ENCODE measurements at regions of chr11 and their contacts with region 1.

Region 1: GRCh38 chr11:76984747-76985146 is 49.5 kb upstream of the B3GNT6 start:
- DNase-seq: no peak
- ATAC-seq: no peak
- H3K4me3 ChIP-seq: no peak overlapping the region
- H3K27ac ChIP-seq: no peak overlapping the region
- H3K4me1 ChIP-seq: no peaks in the 10 kb centered on the region
- H3K27me3 ChIP-seq: no peaks in the 10 kb centered on the region
- CTCF ChIP-seq: no peak
- POLR2A ChIP-seq: no peak

Region 2: DNA sequence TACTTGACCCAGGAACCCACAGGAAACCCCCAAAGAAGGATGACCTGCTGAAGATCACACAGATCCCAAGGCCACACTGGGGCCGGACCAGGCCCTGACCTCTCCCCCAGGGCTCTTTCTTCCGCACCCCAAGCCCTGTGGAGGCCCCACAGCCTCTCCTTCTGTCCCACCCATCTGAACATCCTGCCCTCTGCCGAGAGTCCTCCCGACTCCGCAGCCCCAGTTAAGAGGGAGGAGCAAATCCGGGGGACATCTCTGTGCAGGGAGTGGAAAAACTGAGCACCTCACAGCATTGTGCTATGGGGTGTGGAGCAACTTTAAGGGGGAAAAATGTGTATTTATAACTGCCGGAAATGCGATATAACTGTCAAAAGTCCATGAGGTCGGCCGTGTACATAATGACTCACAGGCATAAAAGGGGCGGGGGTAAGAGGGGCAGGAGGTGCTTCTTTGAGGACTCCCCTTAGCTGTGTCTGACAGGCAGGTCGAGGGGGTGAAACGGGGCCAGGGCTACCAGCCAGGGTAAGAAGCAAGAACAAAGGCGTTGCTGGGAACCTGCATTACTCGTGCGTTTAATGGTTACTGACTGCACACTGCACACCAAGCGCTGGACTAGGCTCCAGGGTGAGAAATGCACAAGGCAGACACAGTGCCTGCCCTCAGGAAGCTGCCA is 835.7 kb before region 1 on chr11:
- intact Hi-C with region 1: no loop called
- DNase-seq: no peak
- ATAC-seq: peak in 3 of 4 donors; percentile 24 to 31 (median 25)
- H3K4me3 ChIP-seq: no peak overlapping the region
- H3K27ac ChIP-seq: peak overlapping the region in 1 of 12 donors; percentile 18
- H3K4me1 ChIP-seq: peaks cover 0 to 20% (median 13%) of the 10 kb centered on the region in 12 donors
- H3K27me3 ChIP-seq: no peaks in the 10 kb centered on the region
- CTCF ChIP-seq: no peak
- POLR2A ChIP-seq: no peak

Region 3: GRCh38 chr11:76919887-76920746 is 64.6 kb before region 1 on chr11:
- intact Hi-C with region 1: no loop called
- DNase-seq: peak; percentile 68 to 84 (median 75)
- ATAC-seq: peak; percentile 78 to 93 (median 89)
- H3K4me3 ChIP-seq: peak overlapping the region in 4 of 12 donors; percentile 9 to 22 (median 14)
- H3K27ac ChIP-seq: no peak overlapping the region
- H3K4me1 ChIP-seq: peaks cover 0 to 20% (median 8%) of the 10 kb centered on the region in 12 donors
- H3K27me3 ChIP-seq: no peaks in the 10 kb centered on the region
- CTCF ChIP-seq: peak; percentile 84 to 94 (median 92)
- POLR2A ChIP-seq: no peak

Region 4: GRCh38 chr11:76939211-76939631 is 45.5 kb before region 1 on chr11:
- intact Hi-C with region 1: loop called in 1 of 10 experiments (anchors 10 kb)
- DNase-seq: no peak
- ATAC-seq: no peak
- H3K4me3 ChIP-seq: no peak overlapping the region
- H3K27ac ChIP-seq: no peak overlapping the region
- H3K4me1 ChIP-seq: no peaks in the 10 kb centered on the region
- H3K27me3 ChIP-seq: no peaks in the 10 kb centered on the region
- CTCF ChIP-seq: no peak
- POLR2A ChIP-seq: no peak

Region 5: GRCh38 chr11:77009533-77010160 is 24.9 kb after region 1 on chr11:
- intact Hi-C with region 1: no loop called
- DNase-seq: no peak
- ATAC-seq: no peak
- H3K4me3 ChIP-seq: no peak overlapping the region
- H3K27ac ChIP-seq: no peak overlapping the region
- H3K4me1 ChIP-seq: no peaks in the 10 kb centered on the region
- H3K27me3 ChIP-seq: no peaks in the 10 kb centered on the region
- CTCF ChIP-seq: no peak
- POLR2A ChIP-seq: no peak

Region 6: GRCh38 chr11:77244243-77245027 is 259.7 kb after region 1 on chr11:
- intact Hi-C with region 1: no loop called
- DNase-seq: no peak
- ATAC-seq: peak in 1 of 4 donors; percentile 33
- H3K4me3 ChIP-seq: no peak overlapping the region
- H3K27ac ChIP-seq: peak overlapping the region in 1 of 12 donors; percentile 38
- H3K4me1 ChIP-seq: no peaks in the 10 kb centered on the region
- H3K27me3 ChIP-seq: no peaks in the 10 kb centered on the region
- CTCF ChIP-seq: no peak
- POLR2A ChIP-seq: no peak

Measured in heart left ventricle (tissue), 16 donors.